ENCODE measurements at regions of chr2 and their contacts with region 1.

Region 1: GRCh38 chr2:64036034-64036705 is 16.9 kb upstream of the VPS54 start:
- DNase-seq: no peak

Region 2: GRCh38 chr2:63977904-63978303 is 58.3 kb before region 1 on chr2:
- in situ Hi-C with region 1: no loop called
- DNase-seq: no peak

Region 3: GRCh38 chr2:64144057-64145013 is 108.2 kb after region 1 on chr2 and contains the start of gene PELI1:
- in situ Hi-C with region 1: loop called (anchors 25 kb)
- DNase-seq: peak; percentile 99
- total RNA-seq, gene PELI1: 8.4 and 10.9 TPM in 2 replicates

Region 4: GRCh38 chr2:64192125-64192479 is 155.9 kb after region 1 on chr2:
- in situ Hi-C with region 1: no loop called
- DNase-seq: no peak

Region 5: GRCh38 chr2:64311948-64312621 is 275.9 kb after region 1 on chr2:
- in situ Hi-C with region 1: loop called (anchors 25 kb)
- DNase-seq: no peak

Measured in Caki2 (cell line).